Common myeloid progenitor, CD34-positive (primary cell): ENCODE measurements at regions of chr21 and their contacts with region 1.

Region 1: GRCh38 chr21:15592271-15592860 is 137.4 kb upstream of the USP25 start:
- DNase-seq: peak; percentile 68 to 89 (median 84)
- H3K4me3 ChIP-seq: no peak overlapping the region
- H3K27ac ChIP-seq: no peak overlapping the region
- H3K4me1 ChIP-seq: no peaks in the 10 kb centered on the region
- H3K27me3 ChIP-seq: no peaks in the 10 kb centered on the region

Region 2: GRCh38 chr21:14259747-14260146 is 1332.6 kb before region 1 on chr21:
- CTCF ChIA-PET with region 1: interaction called, 12 read pairs
- POLR2A ChIA-PET with region 1: no interaction called
- DNase-seq: peak; percentile 31 to 59 (median 56)
- H3K4me3 ChIP-seq: no peak overlapping the region
- H3K27ac ChIP-seq: no peak overlapping the region
- H3K4me1 ChIP-seq: no peaks in the 10 kb centered on the region
- H3K27me3 ChIP-seq: no peaks in the 10 kb centered on the region